Activated CD4-positive, alpha-beta memory T cell treated with anti-CD3 and anti-CD28 coated beads, Interleukin-2, amount 10 ng/mL, durations not matched to agents 7 days and 5 days (primary cell): ENCODE measurements at regions of chr6 and their contacts with region 1.

Region 1: GRCh38 chr6:42661540-42662153 is 60.8 kb downstream of the PRPH2 start:
- DNase-seq: peak; percentile 86
- H3K4me3 Mint-ChIP-seq: no peak overlapping the region
- H3K27ac Mint-ChIP-seq: no peak overlapping the region
- H3K4me1 Mint-ChIP-seq: peaks cover 1% of the 10 kb centered on the region
- H3K27me3 Mint-ChIP-seq: no peaks in the 10 kb centered on the region

Region 2: GRCh38 chr6:42532038-42532669 is 129.5 kb before region 1 on chr6:
- CTCF ChIA-PET with region 1: no interaction called
- POLR2A ChIA-PET with region 1: no interaction called
- DNase-seq: no peak
- H3K4me3 Mint-ChIP-seq: no peak overlapping the region
- H3K27ac Mint-ChIP-seq: no peak overlapping the region
- H3K4me1 Mint-ChIP-seq: no peaks in the 10 kb centered on the region
- H3K27me3 Mint-ChIP-seq: no peaks in the 10 kb centered on the region

Region 3: DNA sequence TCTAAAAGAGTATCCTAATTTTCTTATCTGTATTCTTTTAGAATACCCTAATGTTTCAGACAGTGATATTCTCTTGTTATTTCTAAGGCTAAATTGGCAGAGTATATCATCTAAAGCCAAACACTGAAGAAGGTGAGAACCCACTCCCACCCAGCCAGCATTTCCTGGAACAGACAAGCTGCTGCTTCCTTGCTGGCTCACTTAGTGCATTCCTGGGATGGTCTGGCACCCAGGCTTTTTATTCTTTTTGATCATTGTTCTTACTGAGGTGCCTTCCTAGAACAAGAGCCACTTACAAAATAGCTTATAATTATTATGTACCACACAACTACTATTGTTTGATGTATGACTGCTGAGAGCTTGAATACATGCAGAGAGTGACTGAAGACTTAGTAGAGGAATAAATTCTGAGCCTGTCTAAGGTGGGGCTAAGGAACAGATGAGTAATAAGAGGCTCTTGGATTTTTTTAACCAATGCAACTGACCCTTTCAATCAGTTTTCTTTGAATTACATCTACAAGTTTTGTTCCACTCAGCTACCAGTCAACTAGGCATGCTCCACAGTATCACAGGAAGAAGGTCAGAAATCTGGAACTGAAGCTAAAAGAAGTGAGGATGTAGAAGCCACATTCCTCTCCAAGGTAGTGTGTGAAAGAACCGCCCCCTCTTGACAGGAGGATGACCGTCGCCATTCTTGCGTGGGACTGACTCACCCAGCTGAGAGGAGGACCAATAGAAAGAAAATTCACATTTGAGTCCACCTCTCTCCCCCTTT is 30.7 kb after region 1 on chr6:
- CTCF ChIA-PET with region 1: interaction called, 20 read pairs
- POLR2A ChIA-PET with region 1: interaction called, 3 read pairs
- DNase-seq: no peak
- H3K4me3 Mint-ChIP-seq: no peak overlapping the region
- H3K27ac Mint-ChIP-seq: peak overlapping the region; percentile 29
- H3K4me1 Mint-ChIP-seq: peaks cover 35% of the 10 kb centered on the region
- H3K27me3 Mint-ChIP-seq: no peaks in the 10 kb centered on the region

Region 4: DNA sequence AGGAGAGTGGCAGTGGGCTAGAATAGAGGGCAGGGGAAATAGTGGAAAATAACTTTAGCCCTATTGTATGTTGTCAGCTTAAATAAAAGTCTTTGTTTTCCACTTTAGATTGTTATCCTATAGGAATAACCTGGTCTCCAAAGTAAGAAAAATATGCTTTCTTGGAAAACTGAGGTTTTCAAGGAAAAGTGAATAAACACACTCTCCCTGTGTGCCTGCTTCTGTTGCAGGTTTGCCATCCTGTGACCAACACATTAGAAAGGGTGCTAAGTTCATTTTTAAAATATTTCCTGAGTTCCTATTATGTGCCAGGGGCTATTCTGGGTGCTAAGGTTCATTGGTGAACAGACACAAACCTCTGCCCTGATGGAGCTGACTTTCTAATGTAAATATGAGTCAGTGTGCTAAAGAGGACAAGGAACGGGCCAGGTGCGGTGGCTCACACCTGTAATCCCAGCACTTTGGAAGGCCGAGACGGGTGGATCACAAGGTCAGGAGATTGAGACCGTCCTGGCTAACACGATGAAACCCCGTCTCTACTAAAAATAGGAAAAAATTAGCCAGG is 143.7 kb after region 1 on chr6:
- CTCF ChIA-PET with region 1: no interaction called
- POLR2A ChIA-PET with region 1: no interaction called
- DNase-seq: no peak
- H3K4me3 Mint-ChIP-seq: no peak overlapping the region
- H3K27ac Mint-ChIP-seq: no peak overlapping the region
- H3K4me1 Mint-ChIP-seq: peaks cover 5% of the 10 kb centered on the region
- H3K27me3 Mint-ChIP-seq: no peaks in the 10 kb centered on the region